HepG2 (cell line): ENCODE measurements at regions of chr6 and their contacts with region 1.

Region 1: DNA sequence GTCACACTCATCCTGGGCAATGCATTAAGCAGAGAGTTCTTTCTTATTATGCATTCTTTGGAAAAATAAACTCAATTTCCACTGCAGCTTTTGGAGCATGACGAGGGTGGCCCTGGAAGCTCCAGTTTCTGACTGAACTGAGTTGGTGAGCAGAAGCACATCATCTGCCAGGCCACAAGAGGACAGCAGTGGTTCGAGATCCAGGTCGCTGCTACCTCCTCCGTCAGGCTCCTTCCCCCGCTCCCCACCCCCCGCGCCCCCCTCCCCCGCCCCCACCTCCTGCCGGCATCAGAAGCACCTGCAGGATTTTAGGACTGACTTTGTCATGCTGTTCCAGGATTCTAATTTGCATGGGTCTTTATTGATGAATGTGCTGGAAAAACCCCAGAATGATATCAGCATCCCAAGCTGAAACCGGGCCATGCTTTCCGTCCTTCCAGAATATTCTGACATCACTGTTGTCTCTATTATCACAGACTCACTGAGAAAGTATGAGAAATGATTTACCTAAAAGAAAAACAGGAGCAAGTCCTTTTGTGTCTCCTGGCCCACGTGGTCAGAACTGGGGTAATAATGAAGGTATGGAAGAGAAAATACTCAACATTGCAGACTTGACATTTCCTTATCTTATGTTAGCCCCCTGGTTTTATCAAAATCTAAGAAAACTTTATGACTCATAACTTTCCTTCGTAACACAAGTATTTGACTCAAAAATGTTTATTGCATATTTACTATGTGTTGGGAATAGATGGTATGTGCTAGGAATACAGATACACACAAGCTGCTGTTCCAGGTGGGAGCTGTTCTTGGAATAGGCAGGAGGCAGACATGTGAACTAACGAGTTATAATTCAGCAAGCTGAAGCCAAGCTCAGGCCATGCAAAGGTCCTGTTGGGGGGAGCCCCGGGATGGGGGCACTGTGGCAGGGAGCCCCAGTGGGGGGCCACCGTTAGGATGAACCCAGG is 220.2 kb upstream of the EXOC2 start:
- DNase-seq: peak; percentile 56
- ATAC-seq: peak; percentile 91
- H3K4me3 ChIP-seq: no peak overlapping the region
- H3K27ac ChIP-seq: no peak overlapping the region
- H3K4me1 ChIP-seq: peaks cover 16% of the 10 kb centered on the region
- H3K27me3 ChIP-seq: peaks cover 2 to 15% of the 10 kb centered on the region in 2 experiments; a peak in 1 of 5 replicates
- CTCF ChIP-seq: peak; percentile 84
- EP300 ChIP-seq: no peak
- POLR2A ChIP-seq: no peak
- RAD21 ChIP-seq: peak; percentile 85

Region 2: GRCh38 chr6:854406-855118 is 58.6 kb before region 1 on chr6:
- CTCF ChIA-PET with region 1: no interaction called
- POLR2A ChIA-PET with region 1: no interaction called
- in situ Hi-C with region 1: no loop called
- intact Hi-C with region 1: no loop called
- DNase-seq: no peak
- ATAC-seq: no peak
- H3K4me3 ChIP-seq: no peak overlapping the region
- H3K27ac ChIP-seq: no peak overlapping the region
- H3K4me1 ChIP-seq: no peaks in the 10 kb centered on the region
- H3K27me3 ChIP-seq: peaks cover 0 to 24% of the 10 kb centered on the region in 2 experiments; a peak in 4 of 5 replicates
- CTCF ChIP-seq: no peak
- EP300 ChIP-seq: no peak
- POLR2A ChIP-seq: no peak
- RAD21 ChIP-seq: no peak

Region 3: GRCh38 chr6:1381481-1382330 is 468.6 kb after region 1 on chr6:
- CTCF ChIA-PET with region 1: interaction called, 6 read pairs
- POLR2A ChIA-PET with region 1: interaction called, 3 read pairs
- in situ Hi-C with region 1: loop called (anchors 5 kb)
- intact Hi-C with region 1: loop called (anchors 5 kb)
- DNase-seq: no peak
- ATAC-seq: peak; percentile 86
- H3K4me3 ChIP-seq: peak overlapping the region; percentile 45 to 65 (median 46); a peak in 5 of 6 replicates
- H3K27ac ChIP-seq: no peak overlapping the region
- H3K4me1 ChIP-seq: peaks cover 21% of the 10 kb centered on the region; the same call in 1 of the 2 replicates
- H3K27me3 ChIP-seq: peaks cover 42 to 96% of the 10 kb centered on the region in 2 experiments
- CTCF ChIP-seq: peak; percentile 90
- EP300 ChIP-seq: no peak
- POLR2A ChIP-seq: no peak
- RAD21 ChIP-seq: peak; percentile 100

Region 4: DNA sequence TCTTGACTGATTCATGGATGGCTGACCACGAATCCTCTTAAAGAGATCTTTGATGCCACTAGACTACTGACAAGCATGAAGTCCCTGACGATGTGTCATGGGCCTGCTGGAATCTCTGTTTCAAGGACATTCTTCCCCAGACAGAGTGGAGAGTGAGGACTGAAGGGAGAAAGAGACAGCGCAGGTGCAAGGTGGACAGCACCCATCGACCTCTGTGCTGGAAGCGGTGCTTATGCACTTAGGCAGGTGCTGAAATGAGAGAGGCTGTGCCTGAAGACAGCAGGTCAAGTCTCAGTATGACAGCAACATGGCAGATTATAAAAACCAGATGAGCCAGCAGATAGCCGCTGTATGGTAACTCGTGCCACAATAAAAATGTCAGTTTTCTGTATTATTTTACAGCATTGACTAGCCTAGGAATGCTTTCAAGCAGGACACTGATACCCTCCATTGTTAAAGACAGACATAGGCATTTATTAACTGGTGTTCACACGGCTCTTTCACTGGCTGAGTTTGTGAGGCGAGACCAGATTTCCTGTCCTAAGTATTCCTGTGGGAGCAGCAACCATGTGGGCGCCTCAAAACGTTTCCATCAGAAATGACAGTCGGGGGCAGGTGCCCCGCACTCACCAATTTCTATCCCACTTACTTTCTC is 744.1 kb after region 1 on chr6:
- CTCF ChIA-PET with region 1: no interaction called
- POLR2A ChIA-PET with region 1: no interaction called
- in situ Hi-C with region 1: no loop called
- intact Hi-C with region 1: no loop called
- DNase-seq: no peak
- ATAC-seq: no peak
- H3K4me3 ChIP-seq: no peak overlapping the region
- H3K27ac ChIP-seq: no peak overlapping the region
- H3K4me1 ChIP-seq: no peaks in the 10 kb centered on the region
- H3K27me3 ChIP-seq: no peaks in the 10 kb centered on the region
- CTCF ChIP-seq: no peak
- EP300 ChIP-seq: no peak
- POLR2A ChIP-seq: no peak
- RAD21 ChIP-seq: no peak